Natural killer cell (primary cell): ENCODE measurements at regions of chr15 and their contacts with region 1.

Region 1: DNA sequence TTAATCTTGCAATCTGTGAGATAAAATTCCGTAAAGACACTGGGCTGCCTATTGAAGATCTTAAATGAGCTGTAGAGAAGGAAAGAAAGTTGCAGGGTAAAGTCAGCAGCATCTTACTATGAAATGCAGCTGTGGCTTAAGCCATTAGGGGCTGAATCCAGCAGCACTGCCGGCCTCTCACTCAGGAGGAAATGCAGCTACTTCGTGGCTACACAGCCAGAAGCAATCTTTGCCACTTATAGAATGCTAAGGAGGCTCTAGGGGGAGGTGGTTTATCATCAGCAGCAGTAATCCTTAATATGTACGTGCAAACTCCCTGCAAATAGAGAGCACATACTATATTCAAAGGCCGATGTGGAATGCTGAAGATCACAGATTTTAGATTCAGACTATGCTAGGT is 19.1 kb upstream of the MCTP2 start:
- DNase-seq: no peak
- ATAC-seq: no peak
- H3K4me3 ChIP-seq: no peak overlapping the region
- H3K4me3 Mint-ChIP-seq: no peak overlapping the region
- H3K27ac ChIP-seq: no peak overlapping the region
- H3K27ac Mint-ChIP-seq: no peak overlapping the region
- H3K4me1 ChIP-seq: no peaks in the 10 kb centered on the region
- H3K4me1 Mint-ChIP-seq: peaks cover 6 to 18% of the 10 kb centered on the region in 2 donors
- H3K27me3 ChIP-seq: no peaks in the 10 kb centered on the region
- H3K27me3 Mint-ChIP-seq: peaks cover 0 to 8% of the 10 kb centered on the region in 2 donors
- CTCF ChIP-seq: no peak

Region 2: DNA sequence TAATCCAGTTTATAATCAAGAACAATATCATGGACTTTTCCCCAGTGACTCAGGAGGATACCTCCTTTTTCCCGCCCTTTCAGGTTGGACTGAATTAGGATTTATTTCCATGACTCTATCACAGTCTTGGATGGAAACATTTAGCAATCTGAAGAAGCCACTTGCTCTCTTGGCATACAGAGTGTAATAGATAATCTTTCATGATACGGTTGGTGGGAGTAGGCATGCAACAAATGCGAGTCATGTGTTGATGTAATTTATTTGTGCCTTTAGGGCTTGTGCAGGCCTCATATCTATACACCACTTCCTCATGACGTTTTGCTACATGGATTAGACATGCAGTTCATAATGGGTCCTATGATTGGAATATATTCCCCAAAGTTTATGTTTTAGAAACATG is 35.2 kb before region 1 on chr15:
- intact Hi-C with region 1: loop called (anchors 5 kb)
- DNase-seq: no peak
- ATAC-seq: peak in 1 of 3 donors; percentile 79
- H3K4me3 ChIP-seq: no peak overlapping the region
- H3K4me3 Mint-ChIP-seq: no peak overlapping the region
- H3K27ac ChIP-seq: no peak overlapping the region
- H3K27ac Mint-ChIP-seq: no peak overlapping the region
- H3K4me1 ChIP-seq: peaks cover 9% of the 10 kb centered on the region
- H3K4me1 Mint-ChIP-seq: peaks cover 11 to 13% of the 10 kb centered on the region in 2 donors
- H3K27me3 ChIP-seq: no peaks in the 10 kb centered on the region
- H3K27me3 Mint-ChIP-seq: no peaks in the 10 kb centered on the region
- CTCF ChIP-seq: no peak